ENCODE measurements at regions of chr6 and their contacts with region 1.

Region 1: DNA sequence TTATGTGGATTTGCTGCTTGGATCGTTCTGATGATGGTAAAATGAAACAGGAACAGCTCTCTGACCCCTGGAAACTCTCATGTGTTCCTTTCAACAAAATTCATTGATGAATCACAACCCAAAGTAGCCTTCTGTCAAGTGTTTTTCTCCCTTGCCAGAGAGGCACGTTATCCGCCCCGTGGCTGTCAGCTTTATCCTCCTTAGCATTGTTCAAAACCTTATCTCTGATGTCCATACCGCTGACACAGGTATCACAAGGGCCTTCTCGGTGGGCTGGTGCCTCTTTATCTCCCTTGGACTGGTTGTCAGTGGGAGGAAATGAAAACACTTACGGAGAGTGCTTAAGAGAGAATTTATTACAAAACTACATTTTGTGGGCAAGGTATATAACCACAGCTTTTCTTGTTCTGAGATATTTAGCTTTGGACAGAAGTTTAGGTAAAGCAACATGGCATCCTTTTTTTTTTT is 84.9 kb downstream of the TIAM2 start:
- DNase-seq: peak; percentile 38
- ATAC-seq: peak; percentile 68
- H3K4me3 Mint-ChIP-seq: no peak overlapping the region
- H3K27ac Mint-ChIP-seq: no peak overlapping the region
- H3K4me1 Mint-ChIP-seq: peaks cover 33% of the 10 kb centered on the region
- H3K27me3 Mint-ChIP-seq: peaks cover 2% of the 10 kb centered on the region

Region 2: GRCh38 chr6:155067956-155068615 is 11.9 kb before region 1 on chr6:
- CTCF ChIA-PET with region 1: interaction called, 16 read pairs
- POLR2A ChIA-PET with region 1: no interaction called
- intact Hi-C with region 1: no loop called
- DNase-seq: no peak
- ATAC-seq: no peak
- H3K4me3 Mint-ChIP-seq: no peak overlapping the region
- H3K27ac Mint-ChIP-seq: no peak overlapping the region
- H3K4me1 Mint-ChIP-seq: no peaks in the 10 kb centered on the region
- H3K27me3 Mint-ChIP-seq: peaks cover 3% of the 10 kb centered on the region